ENCODE measurements at regions of chr2 and their contacts with region 1.

Region 1: GRCh38 chr2:157194097-157194688 is 63.3 kb upstream of the GALNT5 start:
- DNase-seq: peak; percentile 78
- H3K4me3 ChIP-seq: no peak overlapping the region
- H3K27ac ChIP-seq: peak overlapping the region; percentile 21
- H3K4me1 ChIP-seq: peaks cover 18% of the 10 kb centered on the region
- H3K27me3 ChIP-seq: no peaks in the 10 kb centered on the region
- CTCF ChIP-seq: peak; percentile 45 to 59
- POLR2A ChIP-seq: no peak

Region 2: GRCh38 chr2:155368934-155369333 is 1825.3 kb before region 1 on chr2:
- CTCF ChIA-PET with region 1: interaction called, 63 read pairs
- POLR2A ChIA-PET with region 1: no interaction called
- dilution Hi-C with region 1: no loop called
- intact Hi-C with region 1: no loop called
- DNase-seq: peak; percentile 24
- H3K4me3 ChIP-seq: no peak overlapping the region
- H3K27ac ChIP-seq: no peak overlapping the region
- H3K4me1 ChIP-seq: no peaks in the 10 kb centered on the region
- H3K27me3 ChIP-seq: no peaks in the 10 kb centered on the region
- CTCF ChIP-seq: no peak
- POLR2A ChIP-seq: no peak

Region 3: GRCh38 chr2:156332534-156333273 is 861.5 kb before region 1 on chr2 and contains the start of gene NR4A2:
- CTCF ChIA-PET with region 1: interaction called, 31 read pairs
- POLR2A ChIA-PET with region 1: interaction called, 3 read pairs
- dilution Hi-C with region 1: no loop called
- intact Hi-C with region 1: loop called (anchors 1 kb)
- DNase-seq: peak; percentile 87
- H3K4me3 ChIP-seq: peak within 1 kb of the TSS; percentile 58 to 75 (median 72)
- H3K27ac ChIP-seq: peak within 1 kb of the TSS; percentile 98
- H3K4me1 ChIP-seq: peaks cover 14% of the 10 kb centered on the region
- H3K27me3 ChIP-seq: peaks cover 3 to 14% of the 10 kb centered on the region in 2 experiments
- CTCF ChIP-seq: no peak
- POLR2A ChIP-seq: peak; percentile 36
- total RNA-seq, gene NR4A2: 1.0 and 1.8 TPM in 2 replicates

Region 4: GRCh38 chr2:156589381-156590079 is 604.7 kb before region 1 on chr2:
- CTCF ChIA-PET with region 1: interaction called, 46 read pairs
- POLR2A ChIA-PET with region 1: no interaction called
- dilution Hi-C with region 1: no loop called
- intact Hi-C with region 1: loop called (anchors 1 kb)
- DNase-seq: peak; percentile 60
- H3K4me3 ChIP-seq: no peak overlapping the region
- H3K27ac ChIP-seq: no peak overlapping the region
- H3K4me1 ChIP-seq: no peaks in the 10 kb centered on the region
- H3K27me3 ChIP-seq: no peaks in the 10 kb centered on the region
- CTCF ChIP-seq: peak; percentile 19 to 40
- POLR2A ChIP-seq: no peak

Region 5: DNA sequence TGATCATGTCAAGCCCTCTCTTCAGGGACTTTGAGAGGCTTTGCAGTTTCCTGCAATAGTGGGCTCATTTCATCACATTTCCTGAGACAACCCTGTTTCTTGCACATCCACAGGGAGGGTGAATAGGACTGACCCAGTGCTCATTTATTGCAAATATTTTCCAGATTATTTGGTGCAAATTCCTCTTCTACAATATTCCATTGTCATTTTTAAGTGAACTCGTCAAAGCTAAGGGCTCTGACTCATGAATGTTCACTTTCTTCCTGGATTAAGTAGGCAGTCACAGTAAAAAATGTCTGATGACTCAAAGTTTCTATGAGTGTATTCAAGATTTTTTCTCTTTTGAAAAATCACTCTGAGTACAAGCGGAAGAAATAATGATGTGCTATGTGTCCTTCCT is 162.2 kb before region 1 on chr2:
- CTCF ChIA-PET with region 1: interaction called, 5 read pairs
- POLR2A ChIA-PET with region 1: no interaction called
- dilution Hi-C with region 1: no loop called
- intact Hi-C with region 1: loop called (anchors 1 kb)
- DNase-seq: peak; percentile 82
- H3K4me3 ChIP-seq: no peak overlapping the region
- H3K27ac ChIP-seq: peak overlapping the region; percentile 50
- H3K4me1 ChIP-seq: peaks cover 9% of the 10 kb centered on the region
- H3K27me3 ChIP-seq: no peaks in the 10 kb centered on the region
- CTCF ChIP-seq: no peak
- POLR2A ChIP-seq: no peak

Region 6: GRCh38 chr2:157182834-157183396 is 11.3 kb before region 1 on chr2:
- CTCF ChIA-PET with region 1: interaction called, 43 read pairs
- POLR2A ChIA-PET with region 1: no interaction called
- dilution Hi-C with region 1: no loop called
- intact Hi-C with region 1: no loop called
- DNase-seq: peak; percentile 94
- H3K4me3 ChIP-seq: no peak overlapping the region
- H3K27ac ChIP-seq: peak overlapping the region; percentile 97
- H3K4me1 ChIP-seq: peaks cover 20% of the 10 kb centered on the region
- H3K27me3 ChIP-seq: no peaks in the 10 kb centered on the region
- CTCF ChIP-seq: no peak
- POLR2A ChIP-seq: peak; percentile 44

Region 7: GRCh38 chr2:157269922-157270321 is 75.7 kb after region 1 on chr2:
- CTCF ChIA-PET with region 1: no interaction called
- POLR2A ChIA-PET with region 1: no interaction called
- dilution Hi-C with region 1: no loop called
- intact Hi-C with region 1: no loop called
- DNase-seq: no peak
- H3K4me3 ChIP-seq: no peak overlapping the region
- H3K27ac ChIP-seq: no peak overlapping the region
- H3K4me1 ChIP-seq: no peaks in the 10 kb centered on the region
- H3K27me3 ChIP-seq: no peaks in the 10 kb centered on the region
- CTCF ChIP-seq: no peak
- POLR2A ChIP-seq: no peak

Measured in endothelial cell of umbilical vein (primary cell).